ENCODE measurements at regions of chr14 and their contacts with region 1.

Region 1: DNA sequence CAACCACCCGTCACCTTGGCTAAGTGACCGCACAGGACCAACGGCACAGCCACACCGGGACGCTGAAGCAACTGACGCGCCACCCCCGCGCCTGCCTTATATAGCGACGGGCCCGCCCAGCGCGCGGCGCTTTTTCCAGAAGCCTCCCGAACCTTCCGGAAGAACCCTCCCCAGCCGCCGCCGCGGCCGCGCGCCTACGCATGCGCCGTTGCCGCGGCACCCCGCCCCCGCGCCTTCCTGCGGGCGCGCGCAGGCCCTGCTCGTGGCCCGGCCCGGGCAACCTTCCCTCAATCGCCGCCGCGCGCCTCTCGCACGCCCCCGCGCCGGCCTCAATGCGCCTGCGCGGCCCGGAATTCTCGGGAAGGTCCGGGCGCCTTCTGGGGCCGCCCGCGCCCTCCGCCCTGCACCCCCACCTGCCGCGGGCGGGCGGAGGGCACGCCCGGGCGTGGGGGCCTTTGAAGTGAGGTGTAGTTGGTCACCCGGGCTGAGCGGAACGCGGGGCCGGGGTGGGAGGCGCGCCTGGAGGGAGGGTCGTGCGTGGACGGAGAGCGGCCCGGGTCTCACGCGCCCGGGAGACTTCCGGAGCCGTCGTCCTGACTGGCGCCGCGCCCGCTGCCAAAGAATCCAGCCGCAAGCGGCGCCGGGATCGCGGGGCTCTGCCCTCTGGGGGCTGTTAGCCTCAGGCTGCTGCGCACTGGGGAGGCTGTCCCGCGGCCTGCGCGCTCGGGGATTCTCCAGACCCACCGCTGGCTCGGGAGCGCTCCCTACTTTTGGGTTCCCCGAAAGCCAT is at the start of gene HSP90AA1:
- DNase-seq: peak; percentile 97
- ATAC-seq: peak; percentile 68
- H3K4me3 Mint-ChIP-seq: peak within 1 kb of the TSS; percentile 77
- H3K27ac Mint-ChIP-seq: peak within 1 kb of the TSS; percentile 92
- H3K4me1 Mint-ChIP-seq: peaks cover 46% of the 10 kb centered on the region
- H3K27me3 Mint-ChIP-seq: no peaks in the 10 kb centered on the region
- total RNA-seq, gene HSP90AA1: 1,344 to 1,372 TPM

Region 2: GRCh38 chr14:101635749-101636560 is 451.2 kb before region 1 on chr14:
- CTCF ChIA-PET with region 1: no interaction called
- POLR2A ChIA-PET with region 1: no interaction called
- intact Hi-C with region 1: no loop called
- DNase-seq: peak; percentile 80
- ATAC-seq: peak; percentile 99
- H3K4me3 Mint-ChIP-seq: no peak overlapping the region
- H3K27ac Mint-ChIP-seq: no peak overlapping the region
- H3K4me1 Mint-ChIP-seq: peaks cover 18% of the 10 kb centered on the region
- H3K27me3 Mint-ChIP-seq: peaks cover 29% of the 10 kb centered on the region

Region 3: GRCh38 chr14:101761032-101761880 is 325.9 kb before region 1 on chr14 and contains the start of gene PPP2R5C:
- CTCF ChIA-PET with region 1: no interaction called
- POLR2A ChIA-PET with region 1: no interaction called
- intact Hi-C with region 1: loop called (anchors 1 to 2 kb)
- DNase-seq: peak; percentile 94
- ATAC-seq: peak; percentile 65
- H3K4me3 Mint-ChIP-seq: peak within 1 kb of the TSS; percentile 85
- H3K27ac Mint-ChIP-seq: peak within 1 kb of the TSS; percentile 78
- H3K4me1 Mint-ChIP-seq: peaks cover 43% of the 10 kb centered on the region
- H3K27me3 Mint-ChIP-seq: no peaks in the 10 kb centered on the region
- total RNA-seq, gene PPP2R5C: 232 to 281 TPM

Region 4: DNA sequence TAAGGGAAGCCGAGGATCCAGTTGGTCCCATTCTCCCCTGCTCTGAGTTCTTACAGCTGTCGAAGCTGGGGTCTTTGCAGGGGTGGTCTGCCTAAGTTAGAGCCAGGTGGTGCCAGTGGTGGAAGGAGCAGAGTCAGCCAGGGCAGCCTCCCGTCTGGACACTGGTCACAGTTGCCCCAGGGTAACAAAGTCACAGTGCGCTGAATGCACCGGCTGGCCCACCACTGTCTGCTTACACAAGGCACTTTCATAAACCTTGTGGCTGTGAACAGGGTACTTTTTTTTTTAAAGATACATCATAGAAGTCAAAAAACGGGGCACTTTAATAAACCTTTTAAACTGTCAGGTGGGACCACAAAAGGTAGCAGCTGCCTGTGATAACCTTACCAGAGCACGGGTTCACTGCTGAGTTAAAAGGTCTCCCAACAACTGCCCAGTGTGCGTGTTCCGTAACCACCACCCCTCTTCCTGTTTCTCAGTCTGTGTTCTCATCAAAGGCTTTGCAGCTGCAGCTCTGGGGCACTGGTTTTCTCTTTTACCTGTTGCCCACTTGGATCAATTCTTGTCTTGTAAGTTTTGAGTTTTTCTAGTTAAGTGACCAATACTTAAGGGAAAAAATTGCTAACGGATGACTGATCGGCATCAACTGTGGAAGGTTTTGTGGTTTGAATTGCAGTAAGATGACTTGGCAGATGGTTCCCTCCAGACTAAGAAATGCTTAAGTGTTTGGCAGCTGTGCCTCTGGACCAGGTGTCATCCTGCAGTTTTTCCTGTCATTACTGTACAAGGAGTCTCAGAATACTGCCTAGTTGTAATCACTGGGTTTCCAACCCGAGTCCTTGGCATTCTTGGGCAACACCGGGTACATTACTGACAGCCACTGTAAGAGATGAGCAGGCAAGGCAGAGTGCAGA is 66.9 kb before region 1 on chr14:
- CTCF ChIA-PET with region 1: no interaction called
- POLR2A ChIA-PET with region 1: no interaction called
- intact Hi-C with region 1: loop called (anchors 1 to 5 kb)
- DNase-seq: peak; percentile 79
- ATAC-seq: peak; percentile 89
- H3K4me3 Mint-ChIP-seq: peak overlapping the region; percentile 13
- H3K27ac Mint-ChIP-seq: peak overlapping the region; percentile 88
- H3K4me1 Mint-ChIP-seq: peaks cover 20% of the 10 kb centered on the region
- H3K27me3 Mint-ChIP-seq: no peaks in the 10 kb centered on the region

Region 5: DNA sequence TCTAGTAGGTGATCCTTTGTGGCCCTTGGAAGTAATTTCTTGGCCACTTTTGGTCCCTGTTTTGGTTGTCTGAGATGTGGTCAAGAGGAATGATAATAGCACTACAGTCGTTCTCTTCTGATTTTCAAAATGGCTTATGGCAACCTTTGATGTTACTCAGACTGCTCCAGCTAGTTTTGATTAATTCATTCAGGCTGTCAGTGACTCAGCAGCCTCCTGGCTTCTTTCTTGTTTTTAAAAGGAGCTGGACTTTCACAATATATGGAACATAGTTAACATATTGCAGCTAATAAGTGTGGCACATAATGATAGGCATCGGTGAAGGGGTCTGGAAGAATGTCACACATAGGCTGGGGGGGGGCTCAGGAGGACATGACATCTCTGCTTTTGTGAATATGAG is 99.9 kb after region 1 on chr14:
- CTCF ChIA-PET with region 1: no interaction called
- POLR2A ChIA-PET with region 1: no interaction called
- intact Hi-C with region 1: loop called in 1 of 2 experiments (anchors 1 kb)
- DNase-seq: no peak
- ATAC-seq: no peak
- H3K4me3 Mint-ChIP-seq: no peak overlapping the region
- H3K27ac Mint-ChIP-seq: peak overlapping the region; percentile 79
- H3K4me1 Mint-ChIP-seq: peaks cover 61% of the 10 kb centered on the region
- H3K27me3 Mint-ChIP-seq: no peaks in the 10 kb centered on the region

Region 6: GRCh38 chr14:102509744-102510615 is 422.8 kb after region 1 on chr14 and contains the start of gene ANKRD9:
- CTCF ChIA-PET with region 1: no interaction called
- POLR2A ChIA-PET with region 1: no interaction called
- intact Hi-C with region 1: loop called in 1 of 2 experiments (anchors 1 kb)
- DNase-seq: peak; percentile 95
- ATAC-seq: peak; percentile 89
- H3K4me3 Mint-ChIP-seq: peak within 1 kb of the TSS; percentile 75
- H3K27ac Mint-ChIP-seq: peak within 1 kb of the TSS; percentile 51
- H3K4me1 Mint-ChIP-seq: peaks cover 16% of the 10 kb centered on the region
- H3K27me3 Mint-ChIP-seq: peaks cover 2% of the 10 kb centered on the region
- total RNA-seq, gene ANKRD9: 4.8 to 9.3 TPM

Region 7: DNA sequence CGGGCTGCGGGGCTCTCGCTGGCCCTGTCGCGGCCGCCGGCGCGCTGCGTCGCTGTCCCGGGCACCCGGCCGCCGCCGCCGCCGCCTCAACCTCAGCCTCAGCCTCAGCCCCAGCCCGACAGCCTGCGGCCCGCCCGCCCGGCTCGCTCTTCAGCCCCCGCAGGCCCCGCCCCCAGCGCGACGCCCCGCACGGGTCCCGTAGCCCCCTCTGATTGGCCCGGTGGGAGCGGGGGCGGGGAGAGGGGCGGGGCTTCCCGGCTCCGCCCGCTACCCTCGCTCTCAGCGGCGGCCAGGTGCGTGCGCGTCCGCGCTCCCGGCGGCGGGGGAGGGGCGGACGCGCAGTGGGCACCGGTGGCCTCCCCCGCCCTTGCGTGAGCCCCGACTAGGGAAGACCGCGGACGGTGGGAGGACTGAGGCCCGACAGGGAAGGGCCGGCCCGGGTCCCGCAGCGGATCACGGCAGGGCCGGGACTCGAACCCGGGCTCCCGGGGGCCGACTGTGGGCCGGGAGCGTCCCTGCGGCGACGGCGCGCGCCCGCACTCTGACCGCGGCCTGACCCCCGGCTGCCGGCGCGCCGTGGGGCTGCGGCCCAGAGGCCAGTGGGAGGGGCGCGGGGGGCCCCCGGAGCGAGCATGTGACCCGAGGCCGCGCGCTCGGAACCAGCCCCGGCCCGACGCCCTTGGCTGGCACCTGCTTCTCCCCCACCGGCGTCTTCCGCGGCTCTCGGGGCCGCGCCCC is 1760.5 kb after region 1 on chr14 and contains the start of gene PPP1R13B:
- CTCF ChIA-PET with region 1: no interaction called
- POLR2A ChIA-PET with region 1: no interaction called
- intact Hi-C with region 1: loop called in 1 of 2 experiments (anchors 5 kb)
- DNase-seq: peak; percentile 97
- ATAC-seq: peak; percentile 98
- H3K4me3 Mint-ChIP-seq: peak within 1 kb of the TSS; percentile 76
- H3K27ac Mint-ChIP-seq: peak within 1 kb of the TSS; percentile 38
- H3K4me1 Mint-ChIP-seq: peaks cover 16% of the 10 kb centered on the region
- H3K27me3 Mint-ChIP-seq: peaks cover 5% of the 10 kb centered on the region
- total RNA-seq, gene PPP1R13B: 9.3 to 10.3 TPM